ENCODE measurements at regions of chr1 and their contacts with region 1.

Region 1: GRCh38 chr1:41492341-41492848 is 7.9 kb upstream of the EDN2 start:
- DNase-seq: peak; percentile 63
- ATAC-seq: peak; percentile 46
- H3K4me3 Mint-ChIP-seq: no peak overlapping the region
- H3K27ac Mint-ChIP-seq: no peak overlapping the region
- H3K4me1 Mint-ChIP-seq: peaks cover 6% of the 10 kb centered on the region
- H3K27me3 Mint-ChIP-seq: peaks cover 25% of the 10 kb centered on the region
- CTCF ChIP-seq: peak; percentile 67

Region 2: DNA sequence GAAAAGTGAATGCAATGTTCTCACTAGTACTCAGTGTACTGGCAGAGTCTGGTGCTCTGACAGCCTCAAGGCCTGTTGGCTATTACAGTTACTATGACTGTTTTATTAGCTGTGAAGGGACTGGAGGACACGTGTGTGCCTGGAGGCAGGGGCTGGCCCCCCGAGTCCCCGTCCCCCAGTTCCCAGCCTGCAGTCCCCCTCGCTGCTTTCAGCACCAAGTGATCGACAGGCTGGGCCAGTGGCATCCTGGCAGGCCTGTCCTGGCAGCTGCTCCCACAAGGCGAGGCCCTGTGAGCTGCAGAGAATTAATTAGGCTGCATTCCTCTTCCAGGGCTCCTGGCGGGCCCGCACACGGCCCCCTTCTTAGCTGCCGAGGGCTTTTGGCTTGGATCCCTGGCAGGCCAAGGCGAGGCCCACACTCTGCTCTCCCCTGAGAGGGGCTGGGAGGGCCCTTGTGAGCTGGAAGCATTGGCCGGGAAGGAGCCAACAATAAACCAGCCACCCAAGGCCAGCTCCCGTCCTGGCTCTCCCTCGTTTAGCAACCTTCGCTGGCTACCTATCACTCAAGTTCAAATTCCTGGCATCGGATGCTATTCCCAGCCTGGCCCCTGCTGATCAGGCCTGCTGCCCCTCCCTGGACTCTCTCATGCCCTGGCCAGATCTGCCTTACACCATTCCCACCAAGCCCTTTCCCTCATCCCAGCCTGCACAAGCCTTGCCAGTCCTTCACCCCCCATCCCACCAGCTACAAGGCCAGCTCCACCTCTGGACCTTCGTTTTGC is 17.7 kb before region 1 on chr1:
- CTCF ChIA-PET with region 1: interaction called, 15 read pairs
- POLR2A ChIA-PET with region 1: no interaction called
- intact Hi-C with region 1: no loop called
- DNase-seq: no peak
- ATAC-seq: no peak
- H3K4me3 Mint-ChIP-seq: no peak overlapping the region
- H3K27ac Mint-ChIP-seq: no peak overlapping the region
- H3K4me1 Mint-ChIP-seq: no peaks in the 10 kb centered on the region
- H3K27me3 Mint-ChIP-seq: no peaks in the 10 kb centered on the region
- CTCF ChIP-seq: no peak

Measured in activated CD8-positive, alpha-beta T cell treated with anti-CD3 and anti-CD28 coated beads for 36 hours (primary cell).